CD4-positive, alpha-beta memory T cell (primary cell): ENCODE measurements at regions of chr7 and their contacts with region 1.

Region 1: GRCh38 chr7:39948956-39949928 is 814 bp upstream of the CDK13 start:
- DNase-seq: peak; percentile 98 to 100 (median 99)
- H3K4me3 ChIP-seq: peak overlapping the region; percentile 67 to 73
- H3K4me3 Mint-ChIP-seq: peak overlapping the region; percentile 96 to 99 (median 98)
- H3K27ac ChIP-seq: peak overlapping the region; percentile 94
- H3K27ac Mint-ChIP-seq: peak overlapping the region; percentile 99 to 100 (median 100)
- H3K4me1 ChIP-seq: peaks cover 32% of the 10 kb centered on the region
- H3K4me1 Mint-ChIP-seq: peaks cover 21 to 47% (median 31%) of the 10 kb centered on the region in 4 donors
- H3K27me3 ChIP-seq: no peaks in the 10 kb centered on the region
- H3K27me3 Mint-ChIP-seq: peaks cover 0 to 5% of the 10 kb centered on the region in 2 donors

Region 2: GRCh38 chr7:38908759-38909335 is 1040.4 kb before region 1 on chr7 and contains the start of gene VPS41:
- CTCF ChIA-PET with region 1: no interaction called
- POLR2A ChIA-PET with region 1: no interaction called
- intact Hi-C with region 1: loop called (anchors 5 kb)
- DNase-seq: peak; percentile 83 to 88 (median 84)
- H3K4me3 ChIP-seq: peak within 1 kb of the TSS; percentile 75 to 82
- H3K4me3 Mint-ChIP-seq: peak within 1 kb of the TSS; percentile 93 to 100 (median 99)
- H3K27ac ChIP-seq: peak within 1 kb of the TSS; percentile 51
- H3K27ac Mint-ChIP-seq: peak within 1 kb of the TSS; percentile 84 to 99 (median 96)
- H3K4me1 ChIP-seq: peaks cover 17% of the 10 kb centered on the region
- H3K4me1 Mint-ChIP-seq: peaks cover 18 to 38% (median 29%) of the 10 kb centered on the region in 4 donors
- H3K27me3 ChIP-seq: no peaks in the 10 kb centered on the region
- H3K27me3 Mint-ChIP-seq: peaks cover 0 to 2% of the 10 kb centered on the region in 2 donors
- total RNA-seq, gene VPS41: 68.3 to 73.3 TPM

Region 3: GRCh38 chr7:39732837-39733804 is 216.1 kb before region 1 on chr7:
- CTCF ChIA-PET with region 1: no interaction called
- POLR2A ChIA-PET with region 1: interaction called, 6 read pairs
- intact Hi-C with region 1: loop called (anchors 10 kb)
- DNase-seq: peak; percentile 87 to 97 (median 94)
- H3K4me3 ChIP-seq: peak overlapping the region; percentile 37 to 84
- H3K4me3 Mint-ChIP-seq: peak overlapping the region; percentile 90 to 100 (median 96)
- H3K27ac ChIP-seq: peak overlapping the region; percentile 88
- H3K27ac Mint-ChIP-seq: peak overlapping the region; percentile 94 to 100 (median 97)
- H3K4me1 ChIP-seq: peaks cover 41% of the 10 kb centered on the region
- H3K4me1 Mint-ChIP-seq: peaks cover 23 to 56% (median 39%) of the 10 kb centered on the region in 4 donors
- H3K27me3 ChIP-seq: no peaks in the 10 kb centered on the region
- H3K27me3 Mint-ChIP-seq: peaks cover 0 to 1% of the 10 kb centered on the region in 2 donors

Region 4: DNA sequence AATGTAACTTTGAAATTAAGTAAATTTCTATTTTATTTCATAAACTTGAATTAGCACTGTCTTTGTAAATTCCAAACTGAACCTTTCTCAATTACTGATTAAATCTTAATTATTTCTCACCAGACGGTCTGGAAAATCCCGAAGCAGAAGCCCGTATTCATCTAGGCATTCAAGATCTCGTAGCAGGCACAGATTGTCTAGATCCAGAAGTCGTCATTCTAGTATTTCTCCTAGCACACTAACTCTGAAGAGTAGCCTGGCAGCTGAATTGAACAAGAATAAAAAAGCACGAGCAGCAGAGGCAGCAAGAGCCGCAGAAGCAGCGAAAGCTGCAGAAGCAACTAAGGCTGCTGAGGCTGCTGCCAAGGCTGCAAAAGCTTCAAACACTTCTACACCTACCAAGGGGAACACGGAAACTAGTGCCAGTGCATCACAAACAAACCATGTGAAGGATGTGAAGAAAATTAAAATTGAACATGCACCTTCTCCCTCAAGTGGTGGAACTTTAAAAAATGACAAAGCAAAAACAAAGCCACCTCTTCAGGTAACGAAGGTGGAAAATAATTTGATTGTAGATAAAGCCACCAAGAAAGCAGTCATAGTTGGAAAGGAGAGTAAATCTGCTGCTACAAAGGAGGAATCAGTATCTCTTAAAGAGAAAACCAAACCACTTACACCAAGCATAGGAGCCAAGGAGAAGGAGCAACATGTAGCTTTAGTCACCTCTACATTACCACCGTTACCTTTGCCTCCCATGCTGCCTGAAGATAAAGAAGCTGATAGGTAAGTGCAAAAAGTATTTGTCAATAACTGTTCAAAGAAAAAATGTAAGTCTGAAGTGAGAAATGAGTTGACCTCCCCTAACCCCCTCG is 38.5 kb after region 1 on chr7:
- CTCF ChIA-PET with region 1: interaction called, 5 read pairs
- POLR2A ChIA-PET with region 1: interaction called, 4 read pairs
- intact Hi-C with region 1: loop called (anchors 2 kb)
- DNase-seq: peak in 4 of 5 donors; percentile 29 to 42 (median 36)
- H3K4me3 ChIP-seq: no peak overlapping the region
- H3K4me3 Mint-ChIP-seq: peak overlapping the region in 3 of 8 donors; percentile 11 to 50 (median 40)
- H3K27ac ChIP-seq: no peak overlapping the region
- H3K27ac Mint-ChIP-seq: peak overlapping the region; percentile 42 to 87 (median 62)
- H3K4me1 ChIP-seq: peaks cover 42% of the 10 kb centered on the region
- H3K4me1 Mint-ChIP-seq: peaks cover 41 to 69% (median 55%) of the 10 kb centered on the region in 4 donors
- H3K27me3 ChIP-seq: no peaks in the 10 kb centered on the region
- H3K27me3 Mint-ChIP-seq: no peaks in the 10 kb centered on the region

Region 5: GRCh38 chr7:40057292-40057691 is 108.0 kb after region 1 on chr7:
- CTCF ChIA-PET with region 1: interaction called, 44 read pairs
- POLR2A ChIA-PET with region 1: interaction called, 46 read pairs
- intact Hi-C with region 1: loop called (anchors 1 kb)
- DNase-seq: no peak
- H3K4me3 ChIP-seq: no peak overlapping the region
- H3K4me3 Mint-ChIP-seq: no peak overlapping the region
- H3K27ac ChIP-seq: no peak overlapping the region
- H3K27ac Mint-ChIP-seq: peak overlapping the region in 4 of 7 donors; percentile 30 to 56 (median 42)
- H3K4me1 ChIP-seq: no peaks in the 10 kb centered on the region
- H3K4me1 Mint-ChIP-seq: peaks cover 6 to 19% (median 12%) of the 10 kb centered on the region in 4 donors
- H3K27me3 ChIP-seq: no peaks in the 10 kb centered on the region
- H3K27me3 Mint-ChIP-seq: no peaks in the 10 kb centered on the region

Region 6: DNA sequence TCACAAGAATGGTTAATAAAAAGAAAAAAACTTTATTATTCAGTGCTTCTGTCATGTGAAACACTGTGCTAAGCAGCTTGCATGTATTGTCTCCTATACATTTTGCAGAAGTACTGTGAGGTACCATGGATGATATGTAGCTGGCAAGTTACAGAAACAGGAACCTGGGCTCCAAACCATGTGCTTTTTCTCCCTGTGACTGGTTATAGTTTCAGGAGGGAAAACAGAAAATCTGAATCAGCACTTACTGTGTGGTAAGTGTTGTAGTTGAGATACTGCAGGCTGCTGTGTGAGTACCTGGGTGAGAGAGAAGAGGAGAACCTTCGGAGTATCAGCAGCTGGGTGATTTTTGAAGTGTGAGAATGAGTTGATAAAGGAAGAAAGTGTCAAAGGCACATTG is 470.6 kb after region 1 on chr7:
- CTCF ChIA-PET with region 1: no interaction called
- POLR2A ChIA-PET with region 1: no interaction called
- intact Hi-C with region 1: no loop called
- DNase-seq: no peak
- H3K4me3 ChIP-seq: no peak overlapping the region
- H3K4me3 Mint-ChIP-seq: no peak overlapping the region
- H3K27ac ChIP-seq: no peak overlapping the region
- H3K27ac Mint-ChIP-seq: no peak overlapping the region
- H3K4me1 ChIP-seq: no peaks in the 10 kb centered on the region
- H3K4me1 Mint-ChIP-seq: no peaks in the 10 kb centered on the region
- H3K27me3 ChIP-seq: no peaks in the 10 kb centered on the region
- H3K27me3 Mint-ChIP-seq: no peaks in the 10 kb centered on the region